ENCODE measurements at regions of chr17 and their contacts with region 1.

Region 1: DNA sequence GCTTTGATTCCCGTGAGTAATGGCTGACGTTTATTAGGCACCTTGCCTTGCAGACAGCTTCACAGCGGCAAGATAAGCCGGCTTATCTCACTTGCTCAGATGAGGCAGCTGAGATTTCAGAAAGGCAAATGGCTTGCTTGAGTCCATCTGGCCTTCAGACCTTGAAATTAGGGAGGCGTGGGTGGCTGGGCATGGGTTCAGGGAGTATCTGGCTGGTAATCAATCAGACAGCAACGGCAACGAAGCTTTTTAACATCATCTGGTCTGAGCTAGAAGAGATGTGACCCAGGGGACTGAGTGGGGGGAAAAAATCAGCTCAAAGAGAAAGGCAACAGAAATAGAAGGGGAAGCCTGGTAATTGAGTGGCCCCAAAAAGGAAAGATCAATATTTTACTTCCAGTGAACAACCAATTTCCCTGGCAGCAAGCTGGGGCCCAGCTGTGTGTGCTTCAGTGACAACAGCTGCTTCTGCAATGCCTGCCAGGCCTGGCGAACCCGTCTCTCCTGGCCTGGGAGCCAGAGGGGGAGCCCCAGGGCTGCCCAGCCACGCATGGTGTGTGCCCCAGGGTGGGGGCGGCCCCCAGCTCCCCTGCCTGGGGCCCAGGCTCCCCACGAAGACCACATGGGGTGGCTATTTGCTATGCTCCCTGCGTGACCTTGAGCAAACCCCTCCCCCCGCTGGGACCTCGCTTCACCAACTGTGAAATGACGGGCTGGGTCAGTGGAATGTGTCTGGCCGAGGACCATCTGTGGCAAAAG is 34.0 kb downstream of the RAB11FIP4 start:
- DNase-seq: peak; percentile 83
- H3K4me3 ChIP-seq: no peak overlapping the region
- H3K27ac ChIP-seq: peak overlapping the region in 1 of 2 experiments; percentile 96; a peak in 2 of 4 replicates
- H3K4me1 ChIP-seq: peaks cover 0 to 28% of the 10 kb centered on the region in 2 experiments; a peak in 2 of 4 replicates
- H3K27me3 ChIP-seq: no peaks in the 10 kb centered on the region
- CTCF ChIP-seq: no peak
- EP300 ChIP-seq: peak in 1 of 2 experiments; percentile 96; a peak in 2 of 4 replicates
- RAD21 ChIP-seq: peak; percentile 30

Region 2: GRCh38 chr17:31405890-31406371 is 19.5 kb before region 1 on chr17:
- CTCF ChIA-PET with region 1: interaction called, 29 read pairs
- POLR2A ChIA-PET with region 1: interaction called, 10 read pairs
- DNase-seq: peak; percentile 76
- H3K4me3 ChIP-seq: no peak overlapping the region
- H3K27ac ChIP-seq: peak overlapping the region in 1 of 2 experiments; percentile 92; a peak in 2 of 4 replicates
- H3K4me1 ChIP-seq: peaks cover 0 to 38% of the 10 kb centered on the region in 2 experiments; a peak in 2 of 4 replicates
- H3K27me3 ChIP-seq: no peaks in the 10 kb centered on the region
- CTCF ChIP-seq: no peak
- EP300 ChIP-seq: no peak
- RAD21 ChIP-seq: no peak

Region 3: GRCh38 chr17:31413874-31414549 is 11.4 kb before region 1 on chr17:
- CTCF ChIA-PET with region 1: interaction called, 29 read pairs
- POLR2A ChIA-PET with region 1: no interaction called
- DNase-seq: no peak
- H3K4me3 ChIP-seq: no peak overlapping the region
- H3K27ac ChIP-seq: no peak overlapping the region
- H3K4me1 ChIP-seq: peaks cover 0 to 33% of the 10 kb centered on the region in 2 experiments; a peak in 1 of 4 replicates
- H3K27me3 ChIP-seq: no peaks in the 10 kb centered on the region
- CTCF ChIP-seq: no peak
- EP300 ChIP-seq: no peak
- RAD21 ChIP-seq: no peak

Region 4: GRCh38 chr17:31517524-31517923 is 92.1 kb after region 1 on chr17:
- CTCF ChIA-PET with region 1: interaction called, 12 read pairs
- POLR2A ChIA-PET with region 1: no interaction called
- DNase-seq: peak; percentile 80
- H3K4me3 ChIP-seq: no peak overlapping the region
- H3K27ac ChIP-seq: no peak overlapping the region; a peak in 1 of 4 replicates
- H3K4me1 ChIP-seq: peaks cover 0 to 27% of the 10 kb centered on the region in 2 experiments; a peak in 1 of 4 replicates
- H3K27me3 ChIP-seq: no peaks in the 10 kb centered on the region
- CTCF ChIP-seq: peak; percentile 41
- EP300 ChIP-seq: no peak
- RAD21 ChIP-seq: peak; percentile 79

Region 5: GRCh38 chr17:31541559-31541958 is 116.1 kb after region 1 on chr17:
- CTCF ChIA-PET with region 1: no interaction called
- POLR2A ChIA-PET with region 1: no interaction called
- DNase-seq: no peak
- H3K4me3 ChIP-seq: no peak overlapping the region
- H3K27ac ChIP-seq: no peak overlapping the region
- H3K4me1 ChIP-seq: peaks cover 0 to 20% of the 10 kb centered on the region in 2 experiments; a peak in 1 of 4 replicates
- H3K27me3 ChIP-seq: no peaks in the 10 kb centered on the region
- CTCF ChIP-seq: peak; percentile 13; the same call in 1 of the 2 replicates
- EP300 ChIP-seq: no peak
- RAD21 ChIP-seq: no peak

Measured in SK-N-SH (cell line).